ENCODE measurements at regions of chr10 and their contacts with region 1.

Region 1: DNA sequence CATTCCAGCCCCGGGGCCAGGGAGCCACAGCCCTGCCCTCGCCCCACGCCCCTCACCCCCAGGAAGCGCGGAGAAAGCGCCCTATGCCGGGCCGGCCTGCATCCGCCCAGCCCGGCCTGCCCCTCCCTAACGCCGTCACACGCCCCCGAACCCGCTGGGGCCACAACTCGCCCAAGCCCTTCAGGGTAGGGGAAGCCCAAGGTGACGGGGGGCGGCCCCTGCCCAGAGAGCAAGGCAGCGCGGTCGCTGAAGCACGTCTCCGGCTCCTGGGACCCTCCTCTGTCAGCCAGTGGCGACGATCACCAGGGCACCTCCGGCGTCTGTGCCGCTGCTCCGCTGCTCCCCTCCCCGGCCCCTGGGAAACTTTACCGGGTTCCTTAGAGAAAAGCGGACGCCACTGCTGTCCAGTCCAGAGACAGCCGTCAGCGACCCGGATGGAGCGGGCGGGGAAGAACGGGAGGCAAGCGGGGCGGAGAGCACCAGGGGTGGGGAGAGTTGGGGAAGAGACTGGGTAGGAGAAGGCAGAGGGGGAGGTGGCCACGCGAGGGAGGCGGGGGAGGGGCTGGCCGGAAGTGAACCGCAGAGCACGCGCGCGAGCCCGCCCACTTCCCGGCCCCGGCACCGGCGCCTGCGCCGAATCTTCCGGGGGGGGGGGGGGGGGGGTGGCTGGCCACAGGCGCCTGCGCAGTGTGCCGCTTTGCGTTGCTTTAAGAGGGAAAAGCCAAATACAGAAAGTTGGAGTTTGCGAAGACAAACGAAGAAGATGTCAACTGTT is at the start of gene HERC4:
- DNase-seq: peak; percentile 88 to 92 (median 89)
- H3K4me3 ChIP-seq: peak within 1 kb of the TSS; percentile 53 to 99
- H3K4me3 Mint-ChIP-seq: peak within 1 kb of the TSS; percentile 95 to 99 (median 98)
- H3K27ac ChIP-seq: peak within 1 kb of the TSS; percentile 98
- H3K27ac Mint-ChIP-seq: peak within 1 kb of the TSS; percentile 91 to 98 (median 95)
- H3K4me1 ChIP-seq: peaks cover 39% of the 10 kb centered on the region
- H3K4me1 Mint-ChIP-seq: peaks cover 30 to 48% (median 39%) of the 10 kb centered on the region in 4 donors
- H3K27me3 ChIP-seq: no peaks in the 10 kb centered on the region
- H3K27me3 Mint-ChIP-seq: no peaks in the 10 kb centered on the region
- total RNA-seq, gene HERC4: 104 to 117 TPM

Region 2: DNA sequence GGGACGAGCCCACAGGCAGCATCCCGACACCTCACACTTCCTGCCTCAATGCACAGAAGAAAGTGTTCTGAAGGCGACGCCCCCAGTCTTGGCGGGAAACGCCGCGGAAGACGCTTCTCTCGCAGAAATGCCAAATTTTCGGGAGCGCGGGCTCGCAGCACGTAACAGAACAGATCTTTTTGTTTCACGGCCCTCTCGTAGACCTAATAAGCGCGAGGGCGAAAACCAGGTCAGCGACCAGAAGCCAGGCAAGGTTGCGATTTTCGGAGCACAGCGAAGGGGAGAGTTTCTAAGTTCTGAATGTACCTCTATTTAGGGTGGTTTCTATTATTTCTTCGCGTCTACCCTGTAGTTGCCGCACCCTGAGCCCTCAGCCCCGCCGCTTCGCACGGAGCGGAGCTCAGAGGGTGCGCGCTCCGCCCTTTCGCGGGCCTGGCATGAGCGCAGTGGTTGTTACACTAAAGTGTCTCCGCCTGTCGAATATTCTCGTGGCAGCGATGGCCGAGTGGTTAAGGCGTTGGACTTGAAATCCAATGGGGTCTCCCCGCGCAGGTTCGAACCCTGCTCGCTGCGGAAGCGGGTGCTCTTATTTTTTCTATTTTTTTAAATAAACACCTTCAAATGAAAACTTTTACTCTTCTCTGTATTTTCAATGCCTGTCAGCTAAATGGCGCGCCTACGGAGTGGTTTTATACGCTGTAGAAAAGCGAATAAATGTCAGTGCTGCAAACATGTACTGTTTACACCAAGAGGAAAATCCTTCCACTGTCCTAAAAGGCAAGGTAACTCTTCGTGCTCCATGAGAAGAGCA is 310.7 kb before region 1 on chr10:
- CTCF ChIA-PET with region 1: no interaction called
- POLR2A ChIA-PET with region 1: interaction called, 4 read pairs
- intact Hi-C with region 1: loop called (anchors 2 kb)
- DNase-seq: peak; percentile 96 to 99 (median 97)
- H3K4me3 ChIP-seq: peak overlapping the region; percentile 58 to 98
- H3K4me3 Mint-ChIP-seq: peak overlapping the region; percentile 90 to 98 (median 95)
- H3K27ac ChIP-seq: peak overlapping the region; percentile 73
- H3K27ac Mint-ChIP-seq: peak overlapping the region; percentile 98 to 100 (median 99)
- H3K4me1 ChIP-seq: peaks cover 14% of the 10 kb centered on the region
- H3K4me1 Mint-ChIP-seq: peaks cover 9 to 28% (median 14%) of the 10 kb centered on the region in 4 donors
- H3K27me3 ChIP-seq: no peaks in the 10 kb centered on the region
- H3K27me3 Mint-ChIP-seq: peaks cover 4 to 9% of the 10 kb centered on the region in 2 donors

Region 3: DNA sequence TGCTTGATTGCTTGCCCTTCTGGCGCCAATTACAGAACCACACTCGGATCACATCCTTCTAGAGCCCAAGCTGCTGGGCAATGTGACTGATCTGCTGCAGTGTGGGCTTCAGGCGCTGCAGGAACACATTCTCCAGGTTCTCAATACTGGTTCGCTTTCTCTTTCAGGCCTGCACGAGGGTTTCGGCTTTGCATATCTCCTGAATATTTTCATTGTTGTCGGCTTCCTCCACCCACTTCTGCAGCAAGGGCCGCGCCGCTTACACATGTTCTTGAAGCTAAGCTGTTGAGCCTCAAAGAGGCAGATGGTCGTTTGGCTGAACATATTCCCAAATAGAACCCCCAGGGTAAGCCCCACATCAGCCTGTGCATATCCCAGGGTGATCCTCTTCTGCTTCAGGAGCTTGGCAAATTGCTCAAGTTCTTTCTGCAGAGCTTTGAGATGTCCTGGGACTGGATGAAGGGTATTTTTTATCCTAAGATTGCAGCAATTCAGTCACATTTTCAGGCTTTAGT is 64.5 kb before region 1 on chr10:
- CTCF ChIA-PET with region 1: no interaction called
- POLR2A ChIA-PET with region 1: no interaction called
- intact Hi-C with region 1: no loop called
- DNase-seq: no peak
- H3K4me3 ChIP-seq: no peak overlapping the region
- H3K4me3 Mint-ChIP-seq: no peak overlapping the region
- H3K27ac ChIP-seq: no peak overlapping the region
- H3K27ac Mint-ChIP-seq: no peak overlapping the region
- H3K4me1 ChIP-seq: no peaks in the 10 kb centered on the region
- H3K4me1 Mint-ChIP-seq: peaks cover 0 to 8% (median 4%) of the 10 kb centered on the region in 4 donors
- H3K27me3 ChIP-seq: no peaks in the 10 kb centered on the region
- H3K27me3 Mint-ChIP-seq: no peaks in the 10 kb centered on the region

Region 4: GRCh38 chr10:68032113-68032512 is 42.8 kb before region 1 on chr10:
- CTCF ChIA-PET with region 1: no interaction called
- POLR2A ChIA-PET with region 1: no interaction called
- intact Hi-C with region 1: loop called (anchors 5 kb)
- DNase-seq: no peak
- H3K4me3 ChIP-seq: no peak overlapping the region
- H3K4me3 Mint-ChIP-seq: no peak overlapping the region
- H3K27ac ChIP-seq: no peak overlapping the region
- H3K27ac Mint-ChIP-seq: no peak overlapping the region
- H3K4me1 ChIP-seq: no peaks in the 10 kb centered on the region
- H3K4me1 Mint-ChIP-seq: peaks cover 0 to 15% (median 11%) of the 10 kb centered on the region in 4 donors
- H3K27me3 ChIP-seq: no peaks in the 10 kb centered on the region
- H3K27me3 Mint-ChIP-seq: no peaks in the 10 kb centered on the region

Measured in CD4-positive, alpha-beta memory T cell (primary cell).